CD8-positive, alpha-beta T cell (primary cell): ENCODE measurements at regions of chr12 and their contacts with region 1.

Region 1: DNA sequence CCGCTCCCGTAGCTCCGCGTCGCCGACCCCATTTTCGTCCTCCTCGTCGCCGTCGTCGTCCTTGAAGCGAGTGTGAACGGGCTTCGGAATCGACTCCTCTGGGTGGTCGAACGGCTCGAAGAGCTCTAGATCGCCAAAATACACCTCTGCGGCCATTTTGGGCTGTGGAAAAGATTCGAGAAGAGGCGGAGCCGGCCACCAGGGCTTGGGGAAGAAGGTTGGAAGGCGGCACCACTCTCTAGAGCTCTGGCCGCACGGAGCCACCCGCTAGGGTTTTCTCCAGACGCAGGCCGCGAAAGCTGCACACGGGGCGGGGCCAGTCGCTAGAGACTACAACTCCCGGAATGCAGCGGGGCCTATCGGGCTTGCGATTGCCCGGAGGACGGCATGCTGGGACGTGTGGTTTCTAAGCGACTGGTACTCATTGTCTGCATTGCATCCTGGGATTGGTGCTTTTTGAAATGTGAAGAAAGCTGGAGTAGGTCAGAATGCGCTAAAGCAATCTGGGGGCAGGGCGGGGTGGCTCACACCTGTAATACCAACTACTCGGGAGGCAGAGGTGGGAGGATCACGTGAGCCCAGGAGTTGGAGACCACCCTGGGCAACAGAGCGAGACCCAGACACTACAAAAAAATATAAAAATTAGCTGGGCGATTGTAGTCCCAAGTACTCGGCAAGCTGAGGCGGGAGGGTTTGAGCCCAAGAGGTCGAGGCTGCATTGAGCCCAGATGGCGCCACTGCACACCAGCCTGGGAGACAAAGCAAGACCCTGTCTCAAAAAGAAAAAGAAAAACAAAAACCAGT is at the start of gene ZCCHC8:
- DNase-seq: peak; percentile 92 to 98 (median 96)
- ATAC-seq: peak; percentile 92
- H3K4me3 ChIP-seq: peak within 1 kb of the TSS; percentile 74 to 80
- H3K4me3 Mint-ChIP-seq: peak within 1 kb of the TSS; percentile 97
- H3K27ac ChIP-seq: peak within 1 kb of the TSS; percentile 90 to 92
- H3K27ac Mint-ChIP-seq: peak within 1 kb of the TSS; percentile 99
- H3K4me1 ChIP-seq: peaks cover 17% of the 10 kb centered on the region
- H3K4me1 Mint-ChIP-seq: peaks cover 40% of the 10 kb centered on the region
- H3K27me3 ChIP-seq: no peaks in the 10 kb centered on the region
- H3K27me3 Mint-ChIP-seq: no peaks in the 10 kb centered on the region
- CTCF ChIP-seq: no peak
- total RNA-seq, gene ZCCHC8: 53.4 to 55.6 TPM

Region 2: GRCh38 chr12:121802846-121803630 is 697.8 kb before region 1 on chr12:
- CTCF ChIA-PET with region 1: no interaction called
- POLR2A ChIA-PET with region 1: no interaction called
- intact Hi-C with region 1: loop called in 1 of 2 experiments (anchors 5 kb)
- DNase-seq: peak; percentile 79 to 95 (median 88)
- ATAC-seq: peak; percentile 43
- H3K4me3 ChIP-seq: peak overlapping the region; percentile 73 to 82
- H3K4me3 Mint-ChIP-seq: peak overlapping the region; percentile 94
- H3K27ac ChIP-seq: peak overlapping the region; percentile 94 to 98
- H3K27ac Mint-ChIP-seq: peak overlapping the region; percentile 99
- H3K4me1 ChIP-seq: peaks cover 34% of the 10 kb centered on the region
- H3K4me1 Mint-ChIP-seq: peaks cover 28% of the 10 kb centered on the region
- H3K27me3 ChIP-seq: no peaks in the 10 kb centered on the region
- H3K27me3 Mint-ChIP-seq: no peaks in the 10 kb centered on the region
- CTCF ChIP-seq: no peak

Region 3: GRCh38 chr12:122148657-122149056 is 352.2 kb before region 1 on chr12:
- CTCF ChIA-PET with region 1: no interaction called
- POLR2A ChIA-PET with region 1: no interaction called
- intact Hi-C with region 1: no loop called
- DNase-seq: no peak
- ATAC-seq: no peak
- H3K4me3 ChIP-seq: no peak overlapping the region
- H3K4me3 Mint-ChIP-seq: no peak overlapping the region
- H3K27ac ChIP-seq: no peak overlapping the region
- H3K27ac Mint-ChIP-seq: peak overlapping the region; percentile 57
- H3K4me1 ChIP-seq: no peaks in the 10 kb centered on the region
- H3K4me1 Mint-ChIP-seq: no peaks in the 10 kb centered on the region
- H3K27me3 ChIP-seq: no peaks in the 10 kb centered on the region
- H3K27me3 Mint-ChIP-seq: no peaks in the 10 kb centered on the region
- CTCF ChIP-seq: no peak

Region 4: DNA sequence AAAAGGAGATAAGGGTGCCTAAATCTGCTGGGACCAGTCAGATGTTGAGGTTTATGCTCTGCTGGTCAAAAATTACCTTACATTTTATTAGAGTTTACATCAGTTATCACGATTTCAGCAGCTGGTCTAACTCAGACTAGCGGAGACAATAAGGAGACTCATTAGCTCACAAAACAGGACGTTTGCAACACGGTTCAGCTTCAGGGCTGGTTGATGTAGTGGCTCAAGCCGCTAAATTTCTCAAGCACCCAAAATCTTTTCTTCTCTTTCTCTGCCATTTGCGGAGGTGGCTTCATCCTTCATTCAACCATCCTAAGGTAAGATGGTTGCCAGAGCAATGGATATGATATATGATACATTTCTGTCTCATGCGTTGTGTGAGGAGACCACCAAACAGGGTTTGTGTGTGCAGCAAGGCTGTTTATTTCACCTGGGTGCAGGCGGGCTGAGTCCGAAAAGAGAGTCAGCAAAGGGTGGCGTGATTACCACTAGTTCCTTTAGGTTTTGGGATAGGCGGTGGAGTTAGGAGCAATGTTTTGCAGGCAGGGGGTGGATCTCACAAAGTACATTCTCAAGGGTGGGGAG is 48.1 kb before region 1 on chr12:
- CTCF ChIA-PET with region 1: no interaction called
- POLR2A ChIA-PET with region 1: no interaction called
- intact Hi-C with region 1: loop called in 1 of 2 experiments (anchors 1 kb)
- DNase-seq: peak in 2 of 9 experiments; percentile 35 to 56
- ATAC-seq: peak; percentile 18
- H3K4me3 ChIP-seq: peak overlapping the region in 1 of 2 experiments; percentile 1
- H3K4me3 Mint-ChIP-seq: peak overlapping the region; percentile 74
- H3K27ac ChIP-seq: peak overlapping the region; percentile 33 to 74
- H3K27ac Mint-ChIP-seq: peak overlapping the region; percentile 97
- H3K4me1 ChIP-seq: peaks cover 29% of the 10 kb centered on the region
- H3K4me1 Mint-ChIP-seq: peaks cover 27% of the 10 kb centered on the region
- H3K27me3 ChIP-seq: no peaks in the 10 kb centered on the region
- H3K27me3 Mint-ChIP-seq: no peaks in the 10 kb centered on the region
- CTCF ChIP-seq: no peak

Region 5: GRCh38 chr12:122519418-122519817 is 18.5 kb after region 1 on chr12:
- CTCF ChIA-PET with region 1: interaction called, 6 read pairs
- POLR2A ChIA-PET with region 1: interaction called, 15 read pairs
- intact Hi-C with region 1: loop called in 1 of 2 experiments (anchors 2 kb)
- DNase-seq: no peak
- ATAC-seq: no peak
- H3K4me3 ChIP-seq: no peak overlapping the region
- H3K4me3 Mint-ChIP-seq: no peak overlapping the region
- H3K27ac ChIP-seq: no peak overlapping the region
- H3K27ac Mint-ChIP-seq: no peak overlapping the region
- H3K4me1 ChIP-seq: peaks cover 28% of the 10 kb centered on the region
- H3K4me1 Mint-ChIP-seq: peaks cover 61% of the 10 kb centered on the region
- H3K27me3 ChIP-seq: no peaks in the 10 kb centered on the region
- H3K27me3 Mint-ChIP-seq: no peaks in the 10 kb centered on the region
- CTCF ChIP-seq: no peak